ENCODE measurements at regions of chr15 and their contacts with region 1.

Region 1: DNA sequence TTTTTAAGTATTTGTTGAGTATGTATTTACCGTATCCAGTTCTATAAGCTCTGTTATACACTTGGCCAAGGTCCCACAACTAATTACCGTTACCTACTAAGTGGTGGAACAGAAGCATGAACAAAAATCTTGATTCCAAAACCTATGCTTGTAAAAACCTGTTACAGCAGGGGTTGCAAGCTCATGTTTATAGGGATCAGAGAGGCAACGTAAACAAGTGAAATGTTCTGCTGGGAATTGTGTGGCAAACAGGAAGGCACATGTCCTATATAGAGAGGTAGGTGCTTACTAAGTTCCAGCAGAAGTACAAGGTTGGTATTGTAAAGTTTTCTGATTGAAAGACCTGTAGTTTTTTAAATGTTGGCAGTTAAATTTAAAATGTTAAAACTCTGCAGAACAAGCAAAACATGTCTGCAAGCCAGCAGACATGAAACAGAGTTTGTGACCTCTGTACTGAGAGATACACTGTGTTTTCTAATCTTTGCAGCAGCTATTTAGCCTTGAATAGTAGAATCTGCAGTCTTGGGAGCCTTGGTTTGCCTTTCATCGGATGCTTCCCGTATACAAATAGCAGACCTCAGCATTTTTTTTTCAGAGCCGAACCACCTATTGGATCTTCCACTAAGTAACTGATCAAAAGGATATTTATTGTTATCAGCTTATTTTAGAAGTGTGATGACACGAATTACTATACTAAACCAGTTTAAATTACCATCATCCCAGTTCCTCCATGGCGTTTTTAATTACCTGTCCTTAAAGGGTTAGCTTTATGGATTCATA is 11.4 kb downstream of the IREB2 start:
- DNase-seq: no peak
- ATAC-seq: no peak
- H3K4me3 ChIP-seq: no peak overlapping the region
- H3K27ac ChIP-seq: peak overlapping the region; percentile 36
- H3K4me1 ChIP-seq: peaks cover 17% of the 10 kb centered on the region
- H3K27me3 ChIP-seq: no peaks in the 10 kb centered on the region

Region 2: DNA sequence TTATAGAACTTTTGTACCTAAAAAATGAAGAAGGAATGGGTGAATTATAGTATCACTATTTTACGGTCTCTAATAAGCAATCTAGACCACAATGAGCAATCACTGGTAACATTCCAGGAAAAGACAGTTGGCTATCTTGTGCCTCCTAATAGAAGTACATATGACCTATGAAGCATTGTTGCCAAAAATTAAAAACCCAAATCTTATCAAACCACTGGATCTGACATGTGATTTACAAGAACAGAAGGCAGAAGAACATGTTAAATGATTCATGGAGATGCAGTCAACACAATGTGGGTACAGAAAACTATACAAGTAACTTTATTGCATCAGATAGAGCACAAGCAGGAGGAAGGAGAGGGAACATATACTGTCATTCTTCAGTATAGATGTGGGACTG is 43.5 kb after region 1 on chr15:
- intact Hi-C with region 1: loop called in 1 of 4 experiments (anchors 2 kb)
- DNase-seq: no peak
- ATAC-seq: no peak
- H3K4me3 ChIP-seq: no peak overlapping the region
- H3K27ac ChIP-seq: no peak overlapping the region
- H3K4me1 ChIP-seq: no peaks in the 10 kb centered on the region
- H3K27me3 ChIP-seq: no peaks in the 10 kb centered on the region